ENCODE measurements at regions of chr6 and their contacts with region 1.

Region 1: DNA sequence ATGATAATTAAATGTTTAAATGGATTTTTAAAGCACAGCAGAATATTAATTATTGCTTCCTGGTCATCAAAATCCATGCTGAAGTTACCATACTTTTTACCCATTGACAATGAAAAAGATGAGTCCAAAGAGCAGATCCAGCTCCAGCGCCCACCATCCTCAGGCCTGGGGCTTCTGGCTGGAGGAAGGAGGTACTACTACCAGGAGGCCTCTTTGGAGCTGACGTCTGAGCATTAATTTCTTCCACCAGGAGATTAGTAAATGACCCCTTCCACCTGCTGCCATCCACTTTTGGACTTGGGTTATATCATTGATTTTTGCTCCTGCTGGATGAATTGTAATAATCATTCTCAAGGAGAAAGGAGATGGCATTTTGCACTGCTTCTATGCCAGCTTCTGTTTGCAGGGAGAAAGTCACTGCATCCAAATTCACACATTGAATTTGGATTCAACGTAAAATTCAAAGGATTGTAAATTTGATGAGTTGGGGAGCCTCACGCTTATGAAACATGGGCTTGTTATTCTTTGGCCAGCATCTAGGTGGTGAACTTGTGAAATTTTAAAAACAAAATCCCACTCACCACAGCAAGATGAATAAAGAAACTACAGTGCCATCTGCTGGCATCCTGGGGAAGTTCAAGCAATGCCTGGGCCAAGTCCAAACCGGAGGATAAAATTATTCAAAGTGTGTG is 121.8 kb downstream of the SASH1 start:
- DNase-seq: peak; percentile 55
- H3K4me3 ChIP-seq: peak overlapping the region in 1 of 2 experiments; percentile 52; a peak in 1 of 4 replicates
- H3K27ac ChIP-seq: peak overlapping the region in 1 of 2 experiments; percentile 47; a peak in 1 of 4 replicates
- H3K4me1 ChIP-seq: peaks cover 0 to 15% of the 10 kb centered on the region in 2 experiments; a peak in 2 of 4 replicates
- H3K27me3 ChIP-seq: no peaks in the 10 kb centered on the region
- CTCF ChIP-seq: peak; percentile 89
- EP300 ChIP-seq: no peak
- RAD21 ChIP-seq: peak; percentile 81

Region 2: GRCh38 chr6:148177589-148178233 is 286.8 kb before region 1 on chr6:
- CTCF ChIA-PET with region 1: interaction called, 17 read pairs
- POLR2A ChIA-PET with region 1: no interaction called
- DNase-seq: peak; percentile 36
- H3K4me3 ChIP-seq: no peak overlapping the region; a peak in 1 of 4 replicates
- H3K27ac ChIP-seq: no peak overlapping the region
- H3K4me1 ChIP-seq: no peaks in the 10 kb centered on the region
- H3K27me3 ChIP-seq: no peaks in the 10 kb centered on the region
- CTCF ChIP-seq: peak; percentile 76
- EP300 ChIP-seq: no peak
- RAD21 ChIP-seq: peak; percentile 58

Region 3: DNA sequence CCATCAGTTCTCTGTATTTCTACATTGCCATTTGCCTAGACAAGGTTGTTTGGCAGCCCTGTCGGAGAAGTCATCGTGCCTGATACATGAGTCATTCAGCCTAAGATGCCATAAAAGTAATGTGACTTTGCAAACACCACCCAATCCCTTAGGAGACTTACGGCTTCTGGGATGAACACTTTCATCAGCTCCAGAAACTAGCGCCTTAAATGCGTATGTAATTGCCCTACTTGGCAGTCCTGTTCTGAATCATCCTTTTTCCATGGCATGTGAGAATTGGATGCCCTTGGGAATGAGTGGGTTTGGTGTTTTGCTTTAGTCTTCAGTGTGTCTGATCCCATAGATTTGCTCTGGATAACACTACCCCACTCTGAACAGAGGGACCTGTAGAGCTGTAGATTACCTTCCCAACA is 36.7 kb after region 1 on chr6:
- CTCF ChIA-PET with region 1: no interaction called
- POLR2A ChIA-PET with region 1: no interaction called
- DNase-seq: no peak
- H3K4me3 ChIP-seq: peak overlapping the region in 1 of 2 experiments; percentile 36; a peak in 1 of 4 replicates
- H3K27ac ChIP-seq: peak overlapping the region; percentile 64 to 98; a peak in 3 of 4 replicates
- H3K4me1 ChIP-seq: peaks cover 2 to 33% of the 10 kb centered on the region in 2 experiments; a peak in 3 of 4 replicates
- H3K27me3 ChIP-seq: no peaks in the 10 kb centered on the region
- CTCF ChIP-seq: no peak
- EP300 ChIP-seq: peak in 1 of 2 experiments; percentile 52; a peak in 1 of 4 replicates
- RAD21 ChIP-seq: no peak

Measured in SK-N-SH (cell line).